GM10248 (cell line): ENCODE measurements at regions of chr10 and their contacts with region 1.

Region 1: GRCh38 chr10:118568327-118568848 is 27.1 kb downstream of the PRLHR start:
- DNase-seq: peak; percentile 65
- CTCF ChIP-seq: peak; percentile 43

Region 2: DNA sequence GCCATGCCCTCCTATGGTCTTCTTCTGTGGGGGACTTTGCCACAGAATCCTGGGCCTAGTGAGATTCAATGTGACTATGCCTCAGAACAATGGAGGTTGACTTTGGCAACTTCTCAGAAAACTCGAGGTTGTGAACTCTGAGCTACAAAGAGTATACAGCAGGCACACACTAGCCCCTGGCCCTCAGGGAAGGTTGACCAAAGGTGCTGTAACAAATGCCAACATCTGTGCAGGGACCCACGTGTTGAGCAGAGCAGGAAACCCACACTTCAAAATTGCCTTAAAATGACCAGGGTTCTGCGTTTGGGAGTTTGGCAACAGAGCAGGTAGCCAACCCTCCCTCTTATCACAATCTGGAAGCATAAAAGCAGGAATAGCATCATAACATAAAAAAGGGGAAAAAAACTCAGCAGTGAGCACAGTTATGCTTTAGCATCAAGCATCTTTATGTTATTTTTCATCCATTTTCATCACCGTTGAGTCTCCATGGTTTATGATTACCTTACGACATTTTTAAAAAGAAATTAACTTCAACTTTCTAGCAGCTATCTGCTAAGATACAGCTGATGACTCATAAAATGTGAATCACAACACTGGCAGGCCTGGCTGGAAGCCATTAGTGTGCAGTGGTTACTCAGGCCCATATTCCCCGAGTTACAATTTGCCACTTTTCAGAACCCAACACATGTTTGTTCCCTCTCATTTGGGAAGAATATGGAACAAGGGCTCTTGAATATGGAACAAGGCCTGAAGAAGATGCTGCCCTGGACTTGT is 16.0 kb after region 1 on chr10:
- CTCF ChIA-PET with region 1: interaction called, 23 read pairs
- POLR2A ChIA-PET with region 1: no interaction called
- DNase-seq: no peak
- CTCF ChIP-seq: no peak

Region 3: DNA sequence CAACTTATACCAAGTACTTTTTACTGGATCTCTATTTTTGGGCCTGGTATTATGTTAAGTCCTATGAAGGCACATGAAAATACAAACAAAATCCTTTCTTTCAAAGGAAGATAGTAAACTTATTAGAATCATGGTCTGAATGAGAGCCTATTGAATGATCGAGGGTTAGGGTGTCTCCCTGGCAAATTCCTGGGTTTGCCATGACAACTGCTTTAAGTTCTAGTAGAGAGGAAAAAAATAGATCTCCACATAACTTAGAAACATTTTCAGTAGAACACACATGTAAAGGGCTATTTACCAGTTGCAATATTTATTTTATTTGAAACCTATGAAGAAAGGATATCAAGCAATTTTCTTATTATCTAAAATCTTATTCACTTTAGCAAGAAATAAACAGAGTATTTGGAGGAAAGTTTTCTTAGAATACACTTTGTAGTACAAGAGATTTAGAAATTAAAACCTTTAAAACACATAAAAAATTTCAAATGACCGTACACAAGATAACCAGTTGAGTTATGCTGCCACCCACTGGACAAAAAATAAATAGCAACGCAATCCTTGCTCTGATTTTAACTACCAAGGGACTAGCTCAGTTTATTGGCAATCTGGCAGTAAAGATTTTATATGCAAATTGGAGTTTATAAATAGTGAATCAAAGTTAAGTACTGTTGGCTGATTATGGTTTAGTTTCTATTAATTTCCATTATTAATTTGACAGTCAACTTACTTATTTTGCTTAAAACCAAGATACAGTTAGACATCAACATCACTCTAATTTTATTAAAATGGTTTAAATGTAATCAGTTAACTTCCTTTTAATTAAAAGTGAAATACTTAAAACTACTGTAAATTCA is 152.5 kb after region 1 on chr10:
- CTCF ChIA-PET with region 1: interaction called, 52 read pairs
- POLR2A ChIA-PET with region 1: no interaction called
- DNase-seq: peak; percentile 45
- CTCF ChIP-seq: peak; percentile 73

Region 4: GRCh38 chr10:118800920-118801319 is 232.5 kb after region 1 on chr10:
- CTCF ChIA-PET with region 1: interaction called, 35 read pairs
- POLR2A ChIA-PET with region 1: no interaction called
- DNase-seq: no peak
- CTCF ChIP-seq: peak; percentile 15

Region 5: GRCh38 chr10:118850418-118851061 is 282.2 kb after region 1 on chr10:
- CTCF ChIA-PET with region 1: interaction called, 14 read pairs
- POLR2A ChIA-PET with region 1: no interaction called
- DNase-seq: peak; percentile 58
- CTCF ChIP-seq: peak; percentile 55